SK-N-SH (cell line): ENCODE measurements at regions of chr2 and their contacts with region 1.

Region 1: DNA sequence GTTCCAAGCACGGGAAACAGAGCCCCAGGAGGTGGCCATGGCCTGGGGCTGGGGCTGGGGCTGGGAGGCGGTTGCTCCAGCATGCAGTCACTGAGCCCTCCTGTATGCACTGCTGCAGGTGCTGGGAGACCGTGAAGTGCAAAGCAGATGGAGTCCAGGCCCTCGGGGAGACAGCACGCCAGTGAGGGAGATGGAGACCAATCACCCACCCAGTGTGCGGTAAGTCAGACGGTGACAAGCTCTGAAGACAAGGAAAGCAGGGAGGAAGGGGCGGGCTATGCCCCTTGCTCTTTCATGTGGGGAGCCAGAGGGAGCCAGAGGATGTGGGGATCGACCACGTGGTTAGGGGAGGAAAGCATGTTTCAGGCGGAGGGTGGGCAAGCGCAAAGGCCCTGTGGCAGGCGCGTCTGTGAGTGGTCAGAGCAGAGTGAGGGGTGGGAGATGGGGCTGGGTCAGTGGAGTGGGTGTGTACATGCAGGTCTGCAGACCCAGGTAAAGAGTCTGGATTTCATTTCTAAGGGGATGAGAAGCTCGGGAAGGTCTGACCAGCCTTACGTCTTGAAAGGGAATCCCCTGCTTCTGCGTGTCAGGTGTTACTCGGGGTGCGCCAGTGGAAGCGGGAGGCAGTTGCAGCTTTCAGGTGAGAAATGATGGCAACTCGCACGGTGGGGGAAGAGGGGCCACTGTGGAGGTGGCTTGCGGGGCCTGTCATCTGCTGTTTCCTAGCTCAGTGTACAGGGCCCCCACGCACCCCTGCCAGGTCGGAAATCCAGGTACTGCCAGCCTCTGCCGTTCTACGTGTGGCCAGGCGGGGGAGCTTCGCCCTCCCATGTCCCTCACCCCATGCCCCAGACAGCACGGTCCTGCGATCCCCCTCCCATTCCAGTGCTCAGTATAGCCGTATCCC is 19.4 kb downstream of the RRM2 start:
- DNase-seq: peak; percentile 88
- H3K4me3 ChIP-seq: no peak overlapping the region
- H3K27ac ChIP-seq: no peak overlapping the region
- H3K4me1 ChIP-seq: peaks cover 0 to 2% of the 10 kb centered on the region in 2 experiments; a peak in 1 of 4 replicates
- H3K27me3 ChIP-seq: no peaks in the 10 kb centered on the region
- CTCF ChIP-seq: peak; percentile 65
- EP300 ChIP-seq: no peak
- RAD21 ChIP-seq: peak; percentile 74

Region 2: GRCh38 chr2:10162586-10163497 is 20.9 kb after region 1 on chr2:
- CTCF ChIA-PET with region 1: interaction called, 100 read pairs
- POLR2A ChIA-PET with region 1: interaction called, 4 read pairs
- DNase-seq: peak; percentile 81
- H3K4me3 ChIP-seq: no peak overlapping the region
- H3K27ac ChIP-seq: peak overlapping the region in 1 of 2 experiments; percentile 39; a peak in 1 of 4 replicates
- H3K4me1 ChIP-seq: peaks cover 0 to 47% of the 10 kb centered on the region in 2 experiments; a peak in 1 of 4 replicates
- H3K27me3 ChIP-seq: no peaks in the 10 kb centered on the region
- CTCF ChIP-seq: no peak
- EP300 ChIP-seq: no peak
- RAD21 ChIP-seq: peak; percentile 51

Region 3: GRCh38 chr2:10170256-10170655 is 28.3 kb after region 1 on chr2:
- CTCF ChIA-PET with region 1: interaction called, 43 read pairs
- POLR2A ChIA-PET with region 1: interaction called, 4 read pairs
- DNase-seq: peak; percentile 63
- H3K4me3 ChIP-seq: no peak overlapping the region
- H3K27ac ChIP-seq: peak overlapping the region; percentile 37 to 90
- H3K4me1 ChIP-seq: peaks cover 19 to 63% of the 10 kb centered on the region in 2 experiments; a peak in 3 of 4 replicates
- H3K27me3 ChIP-seq: no peaks in the 10 kb centered on the region
- CTCF ChIP-seq: no peak
- EP300 ChIP-seq: no peak; a peak in 2 of 4 replicates
- RAD21 ChIP-seq: no peak

Region 4: DNA sequence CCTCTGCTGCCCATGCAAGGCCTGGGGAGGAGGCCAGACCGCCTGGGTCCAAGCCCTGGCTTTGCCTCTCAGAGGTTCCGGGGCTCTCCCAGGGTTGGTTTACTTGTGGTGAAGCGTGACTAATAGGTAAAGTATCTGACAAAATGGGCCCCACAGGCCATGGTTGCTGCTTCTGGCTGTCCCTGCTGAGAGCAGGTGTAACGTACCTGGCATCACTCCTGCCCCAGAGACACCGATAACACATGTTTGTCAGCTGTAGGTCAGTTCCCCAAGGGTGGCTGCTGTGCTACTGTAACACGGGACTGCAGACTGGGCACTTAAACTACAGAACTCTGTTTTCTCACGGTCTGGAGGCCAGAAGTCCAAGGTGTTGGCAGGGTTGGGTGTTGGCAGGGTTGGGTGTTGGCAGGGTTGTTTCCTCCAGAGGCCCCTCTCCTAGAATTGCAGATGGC is 272.0 kb after region 1 on chr2:
- CTCF ChIA-PET with region 1: interaction called, 403 read pairs
- POLR2A ChIA-PET with region 1: interaction called, 4 read pairs
- DNase-seq: no peak
- H3K4me3 ChIP-seq: no peak overlapping the region
- H3K27ac ChIP-seq: no peak overlapping the region
- H3K4me1 ChIP-seq: peaks cover 5 to 34% of the 10 kb centered on the region in 2 experiments; a peak in 3 of 4 replicates
- H3K27me3 ChIP-seq: no peaks in the 10 kb centered on the region
- CTCF ChIP-seq: no peak
- EP300 ChIP-seq: no peak
- RAD21 ChIP-seq: no peak

Region 5: DNA sequence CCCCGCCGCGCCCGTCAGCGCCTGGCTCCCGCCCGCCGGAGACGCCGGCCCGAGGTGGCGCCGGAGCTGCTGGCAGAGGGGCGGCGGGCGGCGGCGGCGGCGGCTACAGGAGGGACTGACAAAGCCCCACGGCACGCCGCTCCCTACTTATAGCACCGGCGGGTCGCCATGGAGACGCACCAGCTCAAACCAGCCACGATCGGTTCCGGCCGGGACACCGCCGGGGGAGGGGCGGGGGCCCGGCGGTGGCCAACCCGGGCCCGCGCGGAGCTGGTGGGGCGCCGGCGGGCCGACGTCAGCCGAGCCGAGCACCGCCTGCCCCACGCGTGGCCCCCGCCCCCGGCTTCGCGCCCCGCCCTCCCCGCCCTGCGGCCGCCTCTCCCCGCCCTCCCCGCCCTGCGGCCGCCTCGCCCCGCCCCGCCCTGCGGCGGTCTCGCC is 306.2 kb after region 1 on chr2 and contains the start of gene ODC1:
- CTCF ChIA-PET with region 1: interaction called, 13 read pairs
- POLR2A ChIA-PET with region 1: no interaction called
- DNase-seq: peak; percentile 99
- H3K4me3 ChIP-seq: peak within 1 kb of the TSS; percentile 76 to 88
- H3K27ac ChIP-seq: peak within 1 kb of the TSS; percentile 68 to 89
- H3K4me1 ChIP-seq: peaks cover 28 to 32% of the 10 kb centered on the region in 2 experiments
- H3K27me3 ChIP-seq: no peaks in the 10 kb centered on the region
- CTCF ChIP-seq: no peak
- EP300 ChIP-seq: peak in 1 of 2 experiments; percentile 18; a peak in 1 of 4 replicates
- RAD21 ChIP-seq: no peak
- polyA plus RNA-seq, gene ODC1: 253 and 273 TPM in 2 replicates

Region 6: GRCh38 chr2:10620481-10620880 is 478.5 kb after region 1 on chr2:
- CTCF ChIA-PET with region 1: no interaction called
- POLR2A ChIA-PET with region 1: no interaction called
- DNase-seq: no peak
- H3K4me3 ChIP-seq: no peak overlapping the region
- H3K27ac ChIP-seq: peak overlapping the region in 1 of 2 experiments; percentile 39; a peak in 1 of 4 replicates
- H3K4me1 ChIP-seq: peaks cover 2 to 10% of the 10 kb centered on the region in 2 experiments; a peak in 3 of 4 replicates
- H3K27me3 ChIP-seq: no peaks in the 10 kb centered on the region
- CTCF ChIP-seq: no peak
- EP300 ChIP-seq: peak in 1 of 2 experiments; percentile 29; a peak in 1 of 4 replicates
- RAD21 ChIP-seq: no peak

Region 7: DNA sequence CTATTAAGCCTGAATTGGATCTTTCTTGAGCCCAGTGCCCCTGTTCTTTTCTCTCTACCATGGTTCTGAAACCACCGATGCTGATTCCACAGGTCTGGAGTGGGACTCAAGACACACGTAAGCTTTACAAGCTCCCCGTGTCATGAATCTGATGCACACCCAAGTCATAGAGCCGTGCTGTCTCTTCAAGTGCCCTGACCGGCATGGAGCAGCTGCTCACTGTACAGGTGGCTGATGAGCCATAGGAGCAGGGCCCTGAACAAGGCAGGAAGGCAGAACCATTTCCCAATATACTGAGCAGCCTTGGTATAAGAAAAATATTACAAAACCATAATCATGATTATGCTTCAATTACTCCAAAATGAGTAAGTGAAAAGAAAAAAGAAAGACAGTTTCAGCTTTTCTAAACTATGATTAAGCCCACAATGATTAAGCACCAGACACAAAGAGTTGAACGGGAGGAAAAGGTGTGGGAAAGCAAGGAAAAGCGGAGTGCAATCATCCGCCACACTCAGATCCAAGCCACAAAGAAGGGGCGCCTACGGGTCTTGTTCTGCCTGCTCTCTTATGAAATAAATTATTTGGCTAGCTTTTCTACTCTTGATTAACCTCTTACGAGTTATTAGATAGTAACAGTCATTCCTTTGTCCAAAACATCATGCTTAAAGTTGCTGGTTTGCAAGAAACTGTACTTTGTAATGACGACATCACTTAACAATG is 506.1 kb after region 1 on chr2:
- CTCF ChIA-PET with region 1: no interaction called
- POLR2A ChIA-PET with region 1: no interaction called
- DNase-seq: no peak
- H3K4me3 ChIP-seq: no peak overlapping the region
- H3K27ac ChIP-seq: no peak overlapping the region
- H3K4me1 ChIP-seq: no peaks in the 10 kb centered on the region
- H3K27me3 ChIP-seq: no peaks in the 10 kb centered on the region
- CTCF ChIP-seq: no peak
- EP300 ChIP-seq: no peak
- RAD21 ChIP-seq: no peak